BJ (cell line): ENCODE measurements at regions of chr6 and their contacts with region 1.

Region 1: GRCh38 chr6:35731736-35732532 is 4.9 kb upstream of the ARMC12 start:
- DNase-seq: no peak
- H3K4me3 ChIP-seq: peak overlapping the region; percentile 77
- H3K27me3 ChIP-seq: no peaks in the 10 kb centered on the region
- CTCF ChIP-seq: no peak

Region 2: GRCh38 chr6:35534407-35535170 is 197.3 kb before region 1 on chr6:
- CTCF ChIA-PET with region 1: interaction called, 20 read pairs
- POLR2A ChIA-PET with region 1: no interaction called
- DNase-seq: no peak
- H3K4me3 ChIP-seq: no peak overlapping the region
- H3K27me3 ChIP-seq: peaks cover 7% of the 10 kb centered on the region
- CTCF ChIP-seq: no peak

Region 3: DNA sequence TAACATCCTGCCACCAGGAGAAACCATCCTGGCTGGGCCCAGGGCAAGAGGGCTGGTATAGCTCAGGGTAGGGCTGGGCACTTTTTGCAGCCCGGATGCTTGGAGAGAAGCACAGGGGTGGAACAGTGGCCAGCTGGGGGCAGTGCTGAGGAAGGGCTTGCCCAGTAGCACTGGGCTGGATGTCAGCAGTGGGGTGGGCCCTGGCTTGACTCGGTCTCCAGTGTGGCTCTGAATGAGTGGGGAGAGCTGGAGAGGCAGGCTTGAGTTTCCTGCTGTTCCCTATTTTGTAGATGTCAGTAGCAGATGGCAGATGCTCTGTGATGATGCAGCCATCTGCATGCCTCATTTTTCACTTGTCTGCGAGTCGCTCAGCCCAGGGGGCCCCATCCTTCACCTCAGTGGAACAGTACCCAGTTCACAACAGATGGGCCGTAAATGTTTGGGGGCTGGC is 162.9 kb before region 1 on chr6:
- CTCF ChIA-PET with region 1: interaction called, 162 read pairs
- POLR2A ChIA-PET with region 1: no interaction called
- DNase-seq: no peak
- H3K4me3 ChIP-seq: no peak overlapping the region
- H3K27me3 ChIP-seq: peaks cover 2% of the 10 kb centered on the region
- CTCF ChIP-seq: peak; percentile 36

Region 4: GRCh38 chr6:35590622-35591066 is 141.3 kb before region 1 on chr6:
- CTCF ChIA-PET with region 1: interaction called, 162 read pairs
- POLR2A ChIA-PET with region 1: no interaction called
- DNase-seq: no peak
- H3K4me3 ChIP-seq: no peak overlapping the region
- H3K27me3 ChIP-seq: no peaks in the 10 kb centered on the region
- CTCF ChIP-seq: no peak

Region 5: GRCh38 chr6:35611240-35611639 is 120.7 kb before region 1 on chr6:
- CTCF ChIA-PET with region 1: interaction called, 12 read pairs
- POLR2A ChIA-PET with region 1: no interaction called
- DNase-seq: peak; percentile 26
- H3K4me3 ChIP-seq: no peak overlapping the region
- H3K27me3 ChIP-seq: no peaks in the 10 kb centered on the region
- CTCF ChIP-seq: no peak

Region 6: DNA sequence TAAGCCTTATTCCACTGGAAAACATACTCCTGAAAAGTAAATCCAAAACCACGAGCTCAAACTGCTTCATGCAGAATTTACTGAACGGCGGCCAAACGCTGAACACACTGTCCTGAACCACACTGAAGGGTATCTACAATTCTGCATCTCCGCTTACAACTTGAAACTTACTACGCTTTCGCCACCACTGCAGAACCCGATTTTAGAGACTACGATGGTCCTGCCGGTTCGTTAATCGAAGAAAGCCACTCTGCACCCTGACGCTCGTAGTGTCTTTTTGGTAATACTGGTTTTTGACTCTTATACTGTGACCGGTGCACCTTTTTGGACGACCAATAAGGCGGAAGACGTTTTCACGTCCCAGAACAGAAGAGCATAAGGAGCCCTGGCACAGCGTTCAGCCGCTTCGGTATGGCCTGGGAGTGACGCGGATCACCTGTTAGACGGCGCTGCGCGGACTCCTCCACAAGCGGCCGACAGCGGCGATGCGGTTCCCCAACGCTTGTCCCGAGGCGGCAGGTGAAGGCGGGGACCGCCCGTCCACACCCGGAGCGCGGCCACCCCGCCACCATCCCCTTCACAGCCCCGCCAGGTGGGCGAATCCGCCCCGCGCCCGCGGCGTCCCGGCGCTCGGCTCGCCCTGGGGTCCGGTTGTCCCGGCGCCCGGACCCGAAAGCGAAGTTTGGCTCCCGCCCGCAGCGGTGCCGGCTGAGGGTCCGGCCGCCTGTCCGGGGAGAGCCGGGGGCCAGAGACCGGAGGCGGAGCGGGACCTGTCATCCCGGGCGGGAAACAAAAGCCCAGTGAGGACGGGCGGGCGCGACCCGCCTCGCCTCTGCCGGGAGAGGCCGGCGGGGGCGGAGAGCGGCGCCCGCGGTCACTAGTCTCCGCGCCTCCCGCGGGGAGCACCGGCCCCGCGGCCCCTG is 44.0 kb before region 1 on chr6:
- CTCF ChIA-PET with region 1: interaction called, 28 read pairs
- POLR2A ChIA-PET with region 1: no interaction called
- DNase-seq: no peak
- H3K4me3 ChIP-seq: peak overlapping the region; percentile 63
- H3K27me3 ChIP-seq: no peaks in the 10 kb centered on the region
- CTCF ChIP-seq: no peak